Activated CD4-positive, alpha-beta T cell treated with anti-CD3 and anti-CD28 coated beads for 36 hours (primary cell): ENCODE measurements at regions of chrX and their contacts with region 1.

Region 1: GRCh38 chrX:119900976-119901375 is 5.3 kb downstream of the AKAP14 start:
- DNase-seq: no peak
- ATAC-seq: no peak
- H3K4me3 Mint-ChIP-seq: no peak overlapping the region
- H3K27ac Mint-ChIP-seq: no peak overlapping the region
- H3K4me1 Mint-ChIP-seq: no peaks in the 10 kb centered on the region
- H3K27me3 Mint-ChIP-seq: no peaks in the 10 kb centered on the region

Region 2: GRCh38 chrX:119917877-119918276 is 16.9 kb after region 1 on chrX:
- CTCF ChIA-PET with region 1: interaction called, 6 read pairs
- POLR2A ChIA-PET with region 1: no interaction called
- intact Hi-C with region 1: loop called in 1 of 2 experiments (anchors 1 kb)
- DNase-seq: no peak
- ATAC-seq: no peak
- H3K4me3 Mint-ChIP-seq: no peak overlapping the region
- H3K27ac Mint-ChIP-seq: no peak overlapping the region
- H3K4me1 Mint-ChIP-seq: no peaks in the 10 kb centered on the region
- H3K27me3 Mint-ChIP-seq: no peaks in the 10 kb centered on the region

Region 3: DNA sequence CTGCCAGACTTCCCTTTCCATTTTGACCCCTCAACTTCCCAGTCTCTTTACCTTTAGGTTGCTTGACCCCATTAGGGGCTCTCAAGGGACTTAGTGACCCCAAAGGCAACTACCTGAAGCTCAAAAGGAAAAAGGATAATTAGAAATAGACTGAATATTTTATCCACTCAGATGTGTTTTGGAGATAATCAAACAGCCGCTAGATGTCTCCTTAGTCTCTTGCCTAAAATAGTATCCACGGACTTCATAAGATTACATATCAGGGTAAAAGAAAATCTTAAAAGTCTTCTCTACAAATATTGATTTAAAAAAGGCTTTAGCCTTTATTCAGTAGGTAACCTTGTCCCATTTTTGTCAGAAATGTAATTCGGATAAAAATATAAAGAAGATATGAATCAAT is 236.5 kb after region 1 on chrX:
- CTCF ChIA-PET with region 1: no interaction called
- POLR2A ChIA-PET with region 1: no interaction called
- intact Hi-C with region 1: loop called in 1 of 2 experiments (anchors 10 kb)
- DNase-seq: no peak
- ATAC-seq: no peak
- H3K4me3 Mint-ChIP-seq: no peak overlapping the region
- H3K27ac Mint-ChIP-seq: no peak overlapping the region
- H3K4me1 Mint-ChIP-seq: no peaks in the 10 kb centered on the region
- H3K27me3 Mint-ChIP-seq: no peaks in the 10 kb centered on the region